ENCODE measurements at regions of chr1 and their contacts with region 1.

Region 1: GRCh38 chr1:153749408-153750005 is 21.7 kb downstream of the INTS3 start:
- DNase-seq: peak; percentile 87
- H3K27ac ChIP-seq: no peak overlapping the region
- CTCF ChIP-seq: peak; percentile 95

Region 2: DNA sequence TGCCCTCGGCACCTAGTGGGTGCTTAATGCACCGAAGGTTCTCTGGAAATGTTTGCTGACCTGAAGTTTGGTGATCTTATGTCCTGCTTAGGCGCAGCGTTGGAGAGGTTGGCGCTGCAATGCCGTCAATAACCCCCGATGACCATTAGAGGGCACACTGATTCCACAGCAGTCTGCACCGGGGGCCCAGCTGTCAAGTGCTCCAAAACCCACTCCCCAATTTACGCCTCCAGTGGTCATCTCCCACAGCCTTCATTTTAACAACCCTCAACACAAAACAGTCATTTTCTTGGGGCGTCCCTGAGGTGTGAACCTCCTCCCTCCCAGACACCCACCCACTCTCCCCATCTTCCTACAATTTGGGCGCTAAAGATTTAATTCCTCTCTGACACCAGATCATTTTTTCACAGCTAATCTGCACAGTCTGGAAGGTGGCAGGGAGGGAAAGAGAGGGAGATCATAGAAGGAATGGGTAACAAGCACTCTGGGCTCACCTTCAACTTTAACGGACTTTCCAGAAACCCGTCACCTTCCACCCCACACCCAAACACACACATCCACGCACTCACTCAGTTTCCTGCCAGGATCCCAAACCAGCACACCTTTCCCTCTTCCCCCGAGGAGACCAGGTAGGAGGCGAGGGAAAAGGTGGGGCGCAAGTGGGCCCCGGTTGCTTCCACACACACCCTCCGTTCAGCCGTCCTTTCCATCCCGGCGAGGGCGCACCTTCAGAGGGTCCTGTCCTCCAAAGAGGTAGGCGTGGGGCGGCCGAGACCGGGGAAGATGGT is 71.6 kb before region 1 on chr1:
- CTCF ChIA-PET with region 1: interaction called, 11 read pairs
- POLR2A ChIA-PET with region 1: no interaction called
- DNase-seq: peak; percentile 60
- H3K27ac ChIP-seq: peak overlapping the region; percentile 16; the same call in 1 of the 2 replicates
- CTCF ChIP-seq: peak; percentile 96

Measured in RWPE1 (cell line).